Ovary (tissue), 10 donors: ENCODE measurements at regions of chr3 and their contacts with region 1.

Region 1: DNA sequence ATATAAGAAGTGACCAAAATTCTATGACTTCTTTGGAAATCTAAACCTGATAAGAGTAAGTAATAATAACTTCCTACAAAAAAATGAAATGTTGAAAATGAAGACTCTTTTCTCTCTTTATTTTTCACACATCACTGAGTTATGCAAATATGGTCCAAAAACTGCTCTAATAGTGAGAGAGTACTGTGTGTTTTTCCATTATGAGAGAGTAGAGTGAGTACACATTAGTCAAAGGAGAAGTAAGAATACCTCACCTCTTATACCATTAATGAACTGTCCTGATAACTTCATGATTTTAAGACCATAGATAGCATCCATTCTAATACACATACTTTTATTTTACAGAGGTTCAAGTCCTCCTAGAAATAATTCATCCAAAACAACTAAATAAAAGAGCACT is 1310.2 kb downstream of the SI start:
- DNase-seq: no peak
- H3K4me3 ChIP-seq: no peak overlapping the region
- H3K27ac ChIP-seq: no peak overlapping the region
- H3K4me1 ChIP-seq: no peaks in the 10 kb centered on the region
- H3K27me3 ChIP-seq: no peaks in the 10 kb centered on the region
- CTCF ChIP-seq: no peak
- EP300 ChIP-seq: no peak
- POLR2A ChIP-seq: no peak

Region 2: GRCh38 chr3:162626172-162626571 is 1141.9 kb before region 1 on chr3:
- intact Hi-C with region 1: no loop called
- DNase-seq: no peak
- H3K4me3 ChIP-seq: no peak overlapping the region
- H3K27ac ChIP-seq: no peak overlapping the region
- H3K4me1 ChIP-seq: no peaks in the 10 kb centered on the region
- H3K27me3 ChIP-seq: no peaks in the 10 kb centered on the region
- CTCF ChIP-seq: no peak
- EP300 ChIP-seq: no peak
- POLR2A ChIP-seq: no peak

Region 3: DNA sequence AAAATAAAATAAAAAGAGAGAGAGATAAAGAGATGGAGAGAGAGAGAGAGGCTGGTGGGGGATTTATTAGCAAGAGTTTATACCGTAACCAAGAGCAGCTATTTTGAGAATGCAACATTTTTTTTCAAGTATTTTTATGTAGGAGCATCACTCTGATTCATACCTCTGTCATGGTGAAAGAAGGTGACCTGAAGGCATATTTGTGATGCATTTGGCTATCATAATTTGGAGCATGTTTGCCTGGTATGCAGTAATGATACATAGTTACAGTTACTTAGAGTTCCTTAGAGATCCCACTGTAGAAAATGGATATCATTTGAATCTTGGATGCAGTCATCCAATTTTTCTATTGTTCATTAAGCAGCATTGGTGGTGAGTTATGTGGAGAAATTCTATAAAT is 162.1 kb before region 1 on chr3:
- intact Hi-C with region 1: no loop called
- DNase-seq: no peak
- H3K4me3 ChIP-seq: no peak overlapping the region
- H3K27ac ChIP-seq: no peak overlapping the region
- H3K4me1 ChIP-seq: no peaks in the 10 kb centered on the region
- H3K27me3 ChIP-seq: no peaks in the 10 kb centered on the region
- CTCF ChIP-seq: no peak
- EP300 ChIP-seq: no peak
- POLR2A ChIP-seq: no peak

Region 4: DNA sequence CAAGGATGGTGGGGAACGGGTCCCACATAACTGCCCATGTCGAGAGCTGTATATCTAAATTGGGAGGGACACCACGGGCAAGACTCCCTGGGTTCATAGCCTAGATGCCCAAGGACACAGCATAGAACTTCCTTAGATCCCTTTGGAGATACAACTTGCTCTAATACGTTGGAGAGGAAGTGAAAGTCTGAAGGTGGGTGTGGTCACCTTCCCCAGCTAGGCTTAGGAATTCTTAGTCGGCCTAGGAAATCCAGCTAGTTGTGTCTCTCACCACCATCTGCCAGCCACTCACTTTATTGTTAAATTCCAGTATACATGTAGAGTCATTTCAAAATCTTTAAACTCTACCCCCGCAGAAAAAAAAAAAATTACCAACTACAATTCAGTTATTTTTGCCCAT is 67.3 kb before region 1 on chr3:
- intact Hi-C with region 1: no loop called
- DNase-seq: no peak
- H3K4me3 ChIP-seq: no peak overlapping the region
- H3K27ac ChIP-seq: no peak overlapping the region
- H3K4me1 ChIP-seq: no peaks in the 10 kb centered on the region
- H3K27me3 ChIP-seq: no peaks in the 10 kb centered on the region
- CTCF ChIP-seq: no peak
- EP300 ChIP-seq: no peak
- POLR2A ChIP-seq: no peak

Region 5: GRCh38 chr3:163809540-163809993 is 41.5 kb after region 1 on chr3:
- intact Hi-C with region 1: loop called in 1 of 4 experiments (anchors 2 kb)
- DNase-seq: no peak
- H3K4me3 ChIP-seq: no peak overlapping the region
- H3K27ac ChIP-seq: no peak overlapping the region
- H3K4me1 ChIP-seq: no peaks in the 10 kb centered on the region
- H3K27me3 ChIP-seq: no peaks in the 10 kb centered on the region
- CTCF ChIP-seq: no peak
- EP300 ChIP-seq: no peak
- POLR2A ChIP-seq: no peak